Thyroid gland (tissue), 4 donors: ENCODE measurements at regions of chr1 and their contacts with region 1.

Region 1: GRCh38 chr1:156608036-156608674 is 6.9 kb upstream of the GPATCH4 start:
- DNase-seq: peak; percentile 51 to 57
- H3K4me3 ChIP-seq: no peak overlapping the region
- H3K27ac ChIP-seq: no peak overlapping the region
- H3K4me1 ChIP-seq: no peaks in the 10 kb centered on the region
- H3K27me3 ChIP-seq: no peaks in the 10 kb centered on the region
- CTCF ChIP-seq: peak in 5 of 6 experiments; percentile 34 to 89 (median 82)
- POLR2A ChIP-seq: no peak

Region 2: DNA sequence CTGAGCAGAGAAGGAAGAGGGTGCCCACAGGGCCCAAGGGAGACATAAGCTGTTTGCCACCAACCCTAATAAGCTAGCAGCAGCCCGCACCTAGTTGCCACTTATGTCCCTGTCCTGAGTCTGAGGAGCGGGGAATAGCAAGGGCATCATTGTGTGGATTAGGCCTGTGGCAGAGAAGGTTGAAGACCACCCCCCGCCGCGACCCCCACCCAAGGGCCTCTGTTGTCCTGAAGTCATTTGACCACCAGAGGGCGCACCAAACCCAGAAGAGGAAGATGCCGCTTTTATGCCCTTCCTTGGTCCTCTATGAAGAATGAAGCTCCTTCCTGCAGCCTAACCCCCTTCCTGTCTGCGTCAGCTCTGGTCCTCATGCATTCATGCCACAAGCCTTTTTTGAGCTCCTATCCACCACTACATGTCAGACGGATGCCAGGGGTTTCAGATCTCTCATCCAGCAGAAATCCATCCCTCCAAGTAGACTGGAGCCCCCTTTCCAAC is 222.6 kb before region 1 on chr1:
- intact Hi-C with region 1: loop called (anchors 5 kb)
- DNase-seq: peak; percentile 42 to 59
- H3K4me3 ChIP-seq: no peak overlapping the region
- H3K27ac ChIP-seq: no peak overlapping the region
- H3K4me1 ChIP-seq: no peaks in the 10 kb centered on the region
- H3K27me3 ChIP-seq: no peaks in the 10 kb centered on the region
- CTCF ChIP-seq: peak; percentile 68 to 90 (median 82)
- POLR2A ChIP-seq: no peak

Region 3: DNA sequence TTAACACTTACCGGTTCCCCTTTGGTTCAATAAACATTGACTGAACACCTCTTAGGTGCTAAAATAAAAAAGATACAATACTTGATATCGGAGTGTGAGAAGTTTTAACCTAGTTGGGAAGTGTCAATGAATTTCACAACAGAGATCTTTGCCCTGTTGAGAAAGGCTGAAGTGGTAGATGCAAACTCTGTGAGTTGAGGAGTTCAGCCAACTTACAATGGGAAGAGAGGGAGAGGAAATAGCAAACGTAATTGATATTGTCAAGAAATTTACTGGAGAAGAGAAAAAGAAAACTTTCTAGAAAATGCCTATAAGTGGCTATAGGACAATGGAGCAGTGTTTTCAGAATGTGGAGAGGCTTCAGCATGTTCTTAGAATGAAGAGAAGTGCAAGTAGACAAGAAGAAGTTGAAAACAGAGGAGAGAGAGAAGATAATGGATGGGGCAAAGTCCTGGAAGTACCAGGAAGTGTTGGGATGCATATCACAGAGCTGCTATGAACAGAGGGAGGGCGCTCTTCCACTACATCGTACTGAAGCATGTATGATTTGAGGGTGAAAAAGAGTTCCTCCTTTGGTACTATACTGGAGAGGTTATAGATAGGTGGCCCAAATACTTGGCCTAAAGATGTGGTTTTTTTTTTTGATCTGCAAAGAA is 156.5 kb before region 1 on chr1:
- intact Hi-C with region 1: loop called (anchors 2 kb)
- DNase-seq: no peak
- H3K4me3 ChIP-seq: no peak overlapping the region
- H3K27ac ChIP-seq: no peak overlapping the region
- H3K4me1 ChIP-seq: peaks cover 0 to 5% of the 10 kb centered on the region in 2 donors
- H3K27me3 ChIP-seq: no peaks in the 10 kb centered on the region
- CTCF ChIP-seq: no peak
- POLR2A ChIP-seq: no peak

Region 4: DNA sequence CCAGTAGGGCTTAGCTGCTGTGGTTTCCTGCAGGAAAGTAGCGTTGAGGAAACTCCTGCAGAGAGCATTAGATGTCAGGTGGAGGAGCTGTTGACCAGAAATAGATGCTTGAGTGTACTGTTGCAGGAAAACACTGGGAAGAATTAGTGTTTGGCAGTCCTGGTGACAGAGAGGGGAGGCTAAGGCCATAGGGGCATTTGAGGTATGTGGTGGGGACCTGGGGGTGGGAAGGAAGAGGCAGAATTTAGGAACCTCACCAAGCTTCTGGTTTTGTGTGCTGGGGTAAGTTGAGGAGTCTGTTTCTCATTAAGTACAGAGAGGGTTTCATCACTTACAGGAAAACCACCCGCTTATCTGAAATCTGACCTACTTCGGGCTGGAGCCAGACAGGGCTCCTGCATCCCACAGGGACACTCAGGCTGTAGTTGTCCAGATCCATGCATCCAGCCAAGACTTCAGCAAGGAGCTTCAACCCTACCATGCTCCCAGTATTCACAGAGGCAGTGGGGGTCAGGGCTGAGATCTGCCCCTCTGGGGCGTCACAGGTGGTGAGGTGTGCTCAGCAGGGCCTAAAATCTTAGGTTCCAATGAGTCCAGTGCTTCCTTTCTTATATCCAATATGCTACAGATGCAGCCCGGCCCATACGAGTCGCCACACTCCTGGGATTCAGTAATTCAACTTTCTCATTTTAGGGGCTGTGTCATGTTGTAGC is 193.4 kb after region 1 on chr1:
- intact Hi-C with region 1: no loop called
- DNase-seq: no peak
- H3K4me3 ChIP-seq: no peak overlapping the region
- H3K27ac ChIP-seq: no peak overlapping the region
- H3K4me1 ChIP-seq: peaks cover 18 to 49% of the 10 kb centered on the region in 2 donors
- H3K27me3 ChIP-seq: no peaks in the 10 kb centered on the region
- CTCF ChIP-seq: no peak
- POLR2A ChIP-seq: no peak